A549 (cell line): ENCODE measurements at regions of chr2 and their contacts with region 1.

Region 1: DNA sequence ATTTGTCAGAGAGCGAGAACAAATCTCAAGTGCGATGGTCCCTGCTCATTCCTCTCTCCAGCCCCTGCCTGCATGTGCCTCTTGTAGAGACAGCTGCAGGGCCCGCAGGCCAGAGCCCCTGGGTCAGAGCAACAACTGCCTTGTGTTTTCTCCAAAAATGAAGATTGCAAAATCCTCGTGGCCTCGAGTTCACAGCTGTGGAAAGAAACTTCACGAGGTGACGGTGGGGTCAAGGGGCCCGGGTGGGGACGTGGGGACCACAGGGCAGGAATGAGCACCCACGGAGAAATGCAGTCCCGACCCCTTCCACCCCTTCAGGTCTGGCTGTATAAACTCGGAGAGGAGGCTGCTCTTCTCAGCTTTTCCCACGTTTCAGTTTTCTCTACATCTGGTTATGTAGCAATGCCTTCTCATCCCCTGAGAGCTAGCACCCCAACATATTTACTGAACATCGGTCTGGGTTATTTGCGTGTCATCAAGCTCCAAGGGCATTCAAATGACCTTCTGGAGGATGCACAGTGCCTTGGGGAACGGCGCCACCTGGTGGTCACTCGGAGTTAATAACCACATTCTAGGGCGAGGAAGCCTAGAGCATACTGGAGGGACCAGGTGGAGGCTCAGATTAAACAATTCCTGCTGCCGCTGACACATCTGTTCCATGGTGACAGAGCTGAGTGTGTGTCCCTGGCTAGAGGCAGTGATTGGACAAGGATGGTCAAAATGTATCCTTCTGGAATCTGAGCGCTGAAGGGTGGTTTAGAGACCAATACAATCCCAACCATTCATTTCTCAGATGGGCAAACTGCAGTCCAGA is 91.4 kb upstream of the CYRIA start:
- DNase-seq: peak; percentile 65 to 68
- ATAC-seq: peak; percentile 89 to 98
- H3K4me3 ChIP-seq: no peak overlapping the region
- H3K27ac ChIP-seq: no peak overlapping the region
- H3K4me1 ChIP-seq: no peaks in the 10 kb centered on the region
- CTCF ChIP-seq: peak; percentile 95
- EP300 ChIP-seq: no peak
- POLR2A ChIP-seq: no peak
- RAD21 ChIP-seq: peak; percentile 91 to 96

Region 2: GRCh38 chr2:15939854-15940660 is 817.0 kb before region 1 on chr2 and contains the start of gene MYCN:
- CTCF ChIA-PET with region 1: interaction called, 12 read pairs
- POLR2A ChIA-PET with region 1: no interaction called
- DNase-seq: peak; percentile 44 to 72
- ATAC-seq: peak; percentile 46 to 61
- H3K4me3 ChIP-seq: peak within 1 kb of the TSS; percentile 37
- H3K27ac ChIP-seq: no peak within 1 kb of the TSS
- H3K4me1 ChIP-seq: peaks cover 24% of the 10 kb centered on the region
- CTCF ChIP-seq: peak; percentile 88
- EP300 ChIP-seq: no peak
- POLR2A ChIP-seq: no peak
- RAD21 ChIP-seq: peak; percentile 88 to 95
- polyA plus RNA-seq, gene MYCN: not detected in 2 replicates

Region 3: DNA sequence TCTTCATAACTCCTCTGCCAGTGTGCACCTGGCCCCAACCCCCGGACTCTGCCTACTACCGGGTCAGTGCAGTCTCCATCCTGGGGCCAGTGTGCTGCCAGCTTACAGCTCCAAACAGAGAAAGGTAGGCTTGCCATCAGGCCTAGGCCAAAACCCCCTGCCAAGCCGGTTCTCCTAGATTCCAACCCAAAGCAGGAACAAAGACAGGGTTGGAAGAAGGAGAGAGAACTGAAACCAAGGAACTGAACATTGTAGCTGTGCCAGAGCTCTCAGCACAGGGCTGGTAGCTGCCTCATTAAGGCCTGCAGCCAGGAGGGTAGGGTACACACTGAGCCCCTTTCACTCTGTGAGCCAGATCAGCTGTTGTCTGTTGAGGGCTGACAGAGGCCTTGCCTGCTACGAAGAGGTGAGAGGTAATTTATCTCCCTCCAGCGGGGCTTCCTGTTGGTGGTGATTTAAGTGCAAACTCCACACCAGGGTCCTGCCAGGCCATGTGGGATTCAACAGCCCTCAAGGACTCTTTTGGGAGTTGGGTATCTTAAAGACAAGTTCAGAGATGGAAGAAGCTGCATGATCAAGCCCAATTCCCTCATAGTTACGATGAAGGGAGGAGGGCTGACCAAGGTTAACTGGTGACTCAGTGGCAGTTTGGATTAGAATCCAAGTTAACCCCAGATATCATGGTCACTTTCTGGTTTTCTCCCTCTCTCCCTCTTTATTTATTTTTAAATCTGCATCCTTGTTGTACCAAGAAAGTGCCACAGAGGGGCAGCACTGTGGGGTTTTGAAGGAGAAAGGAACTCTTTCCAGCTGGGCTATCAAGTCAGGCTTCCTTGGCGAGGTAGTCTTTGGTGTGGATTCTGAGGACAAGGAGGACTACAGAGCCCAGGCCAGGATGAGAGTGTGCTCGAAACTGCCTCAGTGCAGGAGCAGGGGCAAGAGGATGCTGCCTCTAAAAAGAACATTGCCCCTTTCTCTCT is 139.5 kb before region 1 on chr2:
- CTCF ChIA-PET with region 1: interaction called, 93 read pairs
- POLR2A ChIA-PET with region 1: interaction called, 3 read pairs
- DNase-seq: peak in 1 of 2 experiments; percentile 23
- ATAC-seq: peak in 1 of 2 experiments; percentile 28; a peak in 1 of 6 replicates
- H3K4me3 ChIP-seq: no peak overlapping the region
- H3K27ac ChIP-seq: no peak overlapping the region
- H3K4me1 ChIP-seq: no peaks in the 10 kb centered on the region
- CTCF ChIP-seq: peak; percentile 20; the same call in 1 of the 3 replicates
- EP300 ChIP-seq: no peak
- POLR2A ChIP-seq: no peak
- RAD21 ChIP-seq: no peak

Region 4: GRCh38 chr2:16691261-16691660 is 65.8 kb before region 1 on chr2:
- CTCF ChIA-PET with region 1: no interaction called
- POLR2A ChIA-PET with region 1: no interaction called
- DNase-seq: no peak
- ATAC-seq: no peak
- H3K4me3 ChIP-seq: no peak overlapping the region
- H3K27ac ChIP-seq: no peak overlapping the region
- H3K4me1 ChIP-seq: no peaks in the 10 kb centered on the region
- CTCF ChIP-seq: no peak
- EP300 ChIP-seq: no peak
- POLR2A ChIP-seq: no peak
- RAD21 ChIP-seq: no peak

Region 5: DNA sequence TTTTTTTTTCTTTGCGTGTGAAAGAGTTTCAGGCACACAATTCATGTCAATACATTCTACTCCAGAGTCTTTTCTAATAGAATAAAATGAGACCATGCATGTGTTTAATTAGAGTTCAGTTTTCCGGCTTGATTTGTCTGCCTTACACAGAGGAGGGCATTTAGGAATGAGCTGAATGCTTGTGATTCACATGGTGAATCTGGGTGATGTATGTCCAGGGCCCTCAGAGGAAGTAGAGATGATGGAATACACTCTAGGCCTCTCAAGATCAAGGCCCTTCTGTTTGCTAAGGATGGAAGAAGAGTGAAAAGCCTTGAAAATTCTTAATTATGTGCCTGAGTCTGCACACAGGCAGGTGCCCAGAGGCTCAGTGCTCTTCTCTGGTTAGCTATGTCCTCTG is 20.4 kb before region 1 on chr2:
- CTCF ChIA-PET with region 1: interaction called, 15 read pairs
- POLR2A ChIA-PET with region 1: no interaction called
- DNase-seq: no peak
- ATAC-seq: no peak
- H3K4me3 ChIP-seq: no peak overlapping the region
- H3K27ac ChIP-seq: no peak overlapping the region
- H3K4me1 ChIP-seq: no peaks in the 10 kb centered on the region
- CTCF ChIP-seq: no peak
- EP300 ChIP-seq: no peak
- POLR2A ChIP-seq: no peak
- RAD21 ChIP-seq: no peak

Region 6: DNA sequence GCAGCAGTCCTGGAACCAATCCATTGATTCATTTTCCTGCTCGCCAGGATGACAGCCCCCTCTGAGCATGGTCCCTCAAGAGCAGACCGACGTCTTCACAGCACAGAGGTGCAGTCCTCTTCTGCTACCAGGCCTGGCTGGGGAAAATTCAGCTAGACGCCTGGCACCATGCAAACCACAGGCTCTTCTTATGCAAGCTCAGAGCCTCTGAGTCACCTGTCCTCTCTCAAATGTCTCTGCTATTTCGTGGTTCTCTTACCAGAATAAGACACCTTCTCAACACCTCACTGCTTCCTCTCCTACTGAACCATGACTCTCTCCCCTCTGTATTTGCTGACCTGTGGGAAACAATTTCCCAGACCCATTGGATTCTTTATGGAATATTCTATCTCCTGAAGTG is 11.6 kb before region 1 on chr2:
- CTCF ChIA-PET with region 1: interaction called, 17 read pairs
- POLR2A ChIA-PET with region 1: no interaction called
- DNase-seq: no peak
- ATAC-seq: no peak
- H3K4me3 ChIP-seq: no peak overlapping the region
- H3K27ac ChIP-seq: no peak overlapping the region
- H3K4me1 ChIP-seq: no peaks in the 10 kb centered on the region
- CTCF ChIP-seq: no peak
- EP300 ChIP-seq: no peak
- POLR2A ChIP-seq: no peak
- RAD21 ChIP-seq: no peak